ENCODE measurements at regions of chr12 and their contacts with region 1.

Region 1: DNA sequence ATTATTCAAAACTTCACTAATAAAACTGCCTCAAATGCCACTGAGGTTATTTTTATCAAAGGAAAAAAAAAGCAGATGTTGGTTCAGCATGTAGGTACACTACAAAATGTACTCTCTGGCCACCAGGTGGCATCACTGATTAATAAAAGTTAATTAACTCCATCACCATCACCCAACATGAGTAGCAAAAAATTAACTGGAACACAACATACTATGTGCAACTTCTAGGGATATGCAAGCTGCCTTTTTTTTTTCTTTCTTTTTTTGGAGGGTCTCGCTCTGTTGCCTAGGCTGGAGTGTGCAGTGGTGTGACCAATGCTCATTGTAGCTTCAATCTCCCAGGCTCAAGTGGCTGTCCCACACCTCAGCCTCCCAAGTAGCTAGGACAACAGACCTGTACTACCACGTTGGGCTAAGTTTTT is 43.8 kb upstream of the NR2C1 start:
- DNase-seq: peak; percentile 46

Region 2: GRCh38 chr12:95083938-95084337 is 33.3 kb before region 1 on chr12:
- CTCF ChIA-PET with region 1: no interaction called
- POLR2A ChIA-PET with region 1: no interaction called
- DNase-seq: peak; percentile 13

Region 3: DNA sequence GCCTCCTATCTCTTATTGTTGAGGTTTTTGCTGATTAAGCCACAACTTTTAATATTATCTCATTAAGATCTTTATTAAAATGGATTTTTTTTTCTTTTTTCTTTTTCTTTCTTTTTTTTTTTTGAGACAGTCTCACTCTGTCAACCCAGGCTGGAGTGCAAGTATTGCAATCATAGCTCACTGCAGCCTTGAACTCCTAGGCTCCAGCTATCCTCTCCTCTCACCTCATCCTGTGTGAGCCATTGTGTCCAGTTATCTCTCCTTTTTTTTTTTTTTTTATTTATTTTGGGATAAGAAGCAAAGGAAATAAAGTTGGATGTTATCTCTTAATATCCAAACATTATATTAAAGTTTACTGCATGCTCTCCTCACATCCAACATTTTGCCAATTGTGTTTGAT is 113.1 kb after region 1 on chr12:
- CTCF ChIA-PET with region 1: interaction called, 10 read pairs
- POLR2A ChIA-PET with region 1: no interaction called
- DNase-seq: no peak

Measured in HEK293T (cell line).